ENCODE measurements at regions of chr2 and their contacts with region 1.

Region 1: DNA sequence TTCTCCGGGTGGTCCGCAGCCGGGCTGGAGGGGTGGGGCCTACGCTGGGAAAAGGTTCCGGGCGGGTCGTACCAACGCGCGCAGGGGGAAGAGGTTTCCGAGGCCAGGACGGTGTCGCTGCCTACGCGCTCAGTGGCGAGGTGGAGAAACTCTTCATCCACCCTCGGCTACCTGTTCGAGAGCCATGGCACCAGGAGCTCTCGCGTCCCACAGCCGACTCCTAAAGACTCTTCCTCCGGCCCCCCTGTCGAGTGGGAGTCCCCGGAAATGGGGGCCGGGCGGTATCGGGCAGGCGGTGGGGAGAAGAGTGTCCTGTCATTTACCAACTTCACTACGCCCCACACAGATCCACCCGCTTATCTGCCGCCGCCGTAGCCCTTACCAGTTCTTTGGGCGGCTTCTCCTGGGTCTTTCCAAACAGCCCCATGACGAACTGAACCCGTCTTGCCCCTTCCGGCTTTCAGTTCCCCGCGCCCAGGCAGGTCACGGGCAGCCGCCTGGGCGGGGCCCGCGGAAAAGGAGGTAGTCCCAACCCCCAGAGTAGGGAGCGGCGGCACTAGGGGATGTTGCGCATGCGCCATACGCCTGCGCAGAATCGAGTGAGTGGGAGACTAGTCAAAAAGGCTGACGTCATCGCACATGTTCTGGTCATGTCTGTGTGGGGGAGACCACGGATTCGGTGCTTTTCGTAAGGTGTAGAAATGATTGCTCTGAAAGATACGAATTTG is at the start of gene CHMP3:
- DNase-seq: peak; percentile 92 to 95
- ATAC-seq: peak; percentile 95
- H3K4me3 ChIP-seq: peak within 1 kb of the TSS; percentile 81 to 90 (median 86)
- H3K27ac ChIP-seq: peak within 1 kb of the TSS; percentile 97 to 99 (median 99)
- H3K4me1 ChIP-seq: peaks cover 18 to 23% of the 10 kb centered on the region in 2 donors
- H3K27me3 ChIP-seq: no peaks in the 10 kb centered on the region
- CTCF ChIP-seq: peak in 1 of 5 experiments; percentile 19
- POLR2A ChIP-seq: peak; percentile 72 to 75
- total RNA-seq, gene CHMP3: 64.0 to 99.1 (median 71.5) TPM

Region 2: DNA sequence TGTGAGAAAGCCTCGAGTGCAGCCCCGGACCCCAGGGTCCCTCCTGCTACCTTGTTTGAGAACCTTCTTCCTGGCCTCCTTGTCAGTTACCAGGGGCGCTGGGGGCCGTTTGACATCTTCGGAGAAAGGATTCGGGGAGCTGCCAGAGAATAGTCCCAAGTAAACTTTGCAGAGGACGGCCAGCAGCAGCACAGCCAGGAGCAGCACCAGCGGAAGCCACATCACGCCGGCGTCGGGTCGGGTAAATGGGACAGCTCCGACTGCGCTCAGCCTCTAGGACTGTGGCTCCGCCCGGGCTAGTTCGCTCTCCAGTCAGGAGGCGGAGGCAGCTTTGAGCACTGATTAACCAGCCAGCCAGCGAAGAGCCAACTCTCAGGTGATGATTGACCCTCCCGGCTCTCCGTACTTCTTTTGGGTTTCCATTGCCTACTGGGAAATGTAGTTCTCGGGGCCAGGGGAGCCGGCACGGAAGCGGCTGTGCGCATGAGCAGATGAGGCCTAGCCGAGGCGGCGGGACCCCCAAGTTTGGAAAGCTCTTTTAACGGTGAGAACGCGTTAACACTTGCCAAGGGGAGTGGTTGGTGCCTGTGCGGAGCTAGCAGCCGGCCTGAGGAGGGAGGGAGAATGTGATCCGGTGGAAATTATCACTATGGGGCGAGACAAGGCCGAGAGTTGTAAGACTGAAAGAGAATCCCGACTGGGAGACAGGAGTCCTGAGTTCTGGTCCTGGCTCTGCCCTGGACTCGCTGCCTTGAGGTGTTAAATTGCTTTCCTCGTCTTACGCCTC is 1208.6 kb before region 1 on chr2 and contains the starts of genes ELMOD3 and RETSAT:
- in situ Hi-C with region 1: no loop called
- intact Hi-C with region 1: no loop called
- DNase-seq: peak; percentile 99
- ATAC-seq: peak; percentile 90 to 94
- H3K4me3 ChIP-seq: peak within 1 kb of the TSS; percentile 70 to 97 (median 83)
- H3K27ac ChIP-seq: peak within 1 kb of the TSS; percentile 93 to 96 (median 96)
- H3K4me1 ChIP-seq: peaks cover 39 to 44% of the 10 kb centered on the region in 2 donors
- H3K27me3 ChIP-seq: no peaks in the 10 kb centered on the region
- CTCF ChIP-seq: no peak
- POLR2A ChIP-seq: peak; percentile 97
- total RNA-seq, gene ELMOD3: 15.9 to 31.7 (median 25.0) TPM
- total RNA-seq, gene RETSAT: 62.2 to 151 (median 116) TPM

Region 3: GRCh38 chr2:86368161-86368824 is 194.8 kb before region 1 on chr2:
- in situ Hi-C with region 1: no loop called
- intact Hi-C with region 1: no loop called
- DNase-seq: no peak
- ATAC-seq: peak; percentile 42 to 51
- H3K4me3 ChIP-seq: peak overlapping the region in 1 of 4 donors; percentile 18
- H3K27ac ChIP-seq: no peak overlapping the region
- H3K4me1 ChIP-seq: no peaks in the 10 kb centered on the region
- H3K27me3 ChIP-seq: no peaks in the 10 kb centered on the region
- CTCF ChIP-seq: peak; percentile 42 to 72 (median 55)
- POLR2A ChIP-seq: no peak

Region 4: DNA sequence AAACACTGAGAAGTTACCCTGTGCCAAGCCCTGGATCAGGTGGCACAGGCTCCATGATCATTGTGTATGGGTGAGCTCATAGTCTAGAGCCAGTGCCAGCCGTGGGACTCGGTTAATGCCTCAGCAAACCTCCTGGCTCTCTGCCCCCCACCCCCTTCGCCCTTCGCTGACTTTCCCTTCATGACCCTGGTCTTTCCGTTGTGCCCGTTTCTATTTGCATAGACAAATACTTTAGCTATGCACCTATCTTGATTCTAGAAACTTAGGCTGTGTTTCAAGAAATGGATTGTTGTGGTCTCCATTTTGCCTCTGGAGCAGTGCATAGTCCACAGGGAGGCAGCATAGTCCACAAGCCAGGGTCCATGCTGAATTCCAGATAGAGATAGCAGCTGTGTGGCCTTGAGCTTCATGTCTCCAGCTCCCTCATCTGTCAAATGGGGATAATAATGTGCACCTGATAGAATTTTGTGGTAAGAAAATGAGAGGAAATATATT is 166.7 kb before region 1 on chr2:
- in situ Hi-C with region 1: no loop called
- intact Hi-C with region 1: no loop called
- DNase-seq: peak in 1 of 2 donors; percentile 33
- ATAC-seq: peak; percentile 58 to 67
- H3K4me3 ChIP-seq: peak overlapping the region in 2 of 4 donors; percentile 26 to 31
- H3K27ac ChIP-seq: peak overlapping the region in 2 of 4 donors; percentile 29 to 36
- H3K4me1 ChIP-seq: peaks cover 17 to 21% of the 10 kb centered on the region in 2 donors
- H3K27me3 ChIP-seq: no peaks in the 10 kb centered on the region
- CTCF ChIP-seq: peak in 4 of 5 experiments; percentile 28 to 52 (median 36)
- POLR2A ChIP-seq: no peak

Region 5: DNA sequence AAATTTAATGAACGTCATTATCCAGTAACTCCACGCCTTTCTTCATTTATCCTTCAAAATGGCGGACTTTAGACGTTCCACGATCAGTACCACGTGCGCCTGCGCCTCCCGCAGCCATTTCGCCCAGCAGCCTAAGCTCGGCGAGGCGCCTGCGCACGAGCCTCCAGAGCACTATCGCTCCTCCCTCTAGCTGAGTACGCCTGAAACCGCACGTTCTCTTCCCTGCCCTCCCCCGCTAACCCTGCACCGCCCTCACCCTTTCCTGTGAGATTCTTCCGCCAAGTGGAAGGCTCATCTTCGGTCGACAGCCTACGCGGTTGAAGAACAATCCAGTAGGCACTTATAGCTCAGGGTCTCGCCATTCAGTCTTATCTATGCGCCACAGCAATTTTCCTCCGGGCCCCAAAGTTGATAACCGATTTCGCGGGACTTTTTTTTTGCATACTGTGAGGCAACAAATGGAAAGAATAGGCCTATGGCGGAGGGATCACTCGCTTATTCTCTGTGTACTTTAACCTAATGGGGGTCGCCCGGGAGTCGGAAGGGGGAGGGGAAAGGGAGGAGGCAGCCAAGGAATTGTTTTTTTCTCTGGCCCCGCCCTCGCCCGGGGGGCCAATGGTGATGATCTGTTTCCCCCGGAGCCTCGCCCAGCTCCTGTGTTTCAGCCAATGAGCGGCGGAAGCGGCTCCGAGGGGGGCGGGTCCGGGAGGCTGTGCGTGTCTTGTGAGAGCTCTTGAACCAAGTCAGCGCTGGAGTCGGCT is 122.3 kb before region 1 on chr2 and contains the start of gene KDM3A:
- in situ Hi-C with region 1: no loop called
- intact Hi-C with region 1: loop called (anchors 2 kb)
- DNase-seq: peak; percentile 99
- ATAC-seq: peak; percentile 84 to 86
- H3K4me3 ChIP-seq: peak within 1 kb of the TSS; percentile 74 to 81 (median 76)
- H3K27ac ChIP-seq: peak within 1 kb of the TSS; percentile 86 to 98 (median 91)
- H3K4me1 ChIP-seq: peaks cover 31 to 33% of the 10 kb centered on the region in 2 donors
- H3K27me3 ChIP-seq: no peaks in the 10 kb centered on the region
- CTCF ChIP-seq: peak in 1 of 5 experiments; percentile 5
- POLR2A ChIP-seq: no peak
- total RNA-seq, gene KDM3A: 20.7 to 36.8 (median 26.1) TPM

Region 6: GRCh38 chr2:86512034-86512433 is 51.1 kb before region 1 on chr2:
- in situ Hi-C with region 1: no loop called
- intact Hi-C with region 1: loop called (anchors 5 kb)
- DNase-seq: no peak
- ATAC-seq: no peak
- H3K4me3 ChIP-seq: no peak overlapping the region
- H3K27ac ChIP-seq: peak overlapping the region; percentile 33 to 80 (median 76)
- H3K4me1 ChIP-seq: peaks cover 58 to 60% of the 10 kb centered on the region in 2 donors
- H3K27me3 ChIP-seq: no peaks in the 10 kb centered on the region
- CTCF ChIP-seq: no peak
- POLR2A ChIP-seq: no peak

Region 7: GRCh38 chr2:86704459-86704971 is 141.4 kb after region 1 on chr2:
- in situ Hi-C with region 1: no loop called
- intact Hi-C with region 1: loop called (anchors 5 kb)
- DNase-seq: peak; percentile 42 to 67
- ATAC-seq: peak; percentile 91 to 95
- H3K4me3 ChIP-seq: peak overlapping the region in 2 of 4 donors; percentile 20 to 33
- H3K27ac ChIP-seq: peak overlapping the region; percentile 79 to 90 (median 86)
- H3K4me1 ChIP-seq: peaks cover 16 to 20% of the 10 kb centered on the region in 2 donors
- H3K27me3 ChIP-seq: no peaks in the 10 kb centered on the region
- CTCF ChIP-seq: no peak
- POLR2A ChIP-seq: no peak